Tibial artery (tissue), 4 donors: ENCODE measurements at regions of chr17 and their contacts with region 1.

Region 1: GRCh38 chr17:41548844-41549595 is 20.9 kb upstream of the KRT19 start:
- DNase-seq: peak; percentile 84 to 87
- H3K4me3 ChIP-seq: peak overlapping the region; percentile 4 to 23
- H3K27ac ChIP-seq: peak overlapping the region; percentile 61 to 62
- H3K4me1 ChIP-seq: peaks cover 0 to 28% (median 25%) of the 10 kb centered on the region in 4 donors
- H3K27me3 ChIP-seq: no peaks in the 10 kb centered on the region
- CTCF ChIP-seq: peak; percentile 84 to 90

Region 2: DNA sequence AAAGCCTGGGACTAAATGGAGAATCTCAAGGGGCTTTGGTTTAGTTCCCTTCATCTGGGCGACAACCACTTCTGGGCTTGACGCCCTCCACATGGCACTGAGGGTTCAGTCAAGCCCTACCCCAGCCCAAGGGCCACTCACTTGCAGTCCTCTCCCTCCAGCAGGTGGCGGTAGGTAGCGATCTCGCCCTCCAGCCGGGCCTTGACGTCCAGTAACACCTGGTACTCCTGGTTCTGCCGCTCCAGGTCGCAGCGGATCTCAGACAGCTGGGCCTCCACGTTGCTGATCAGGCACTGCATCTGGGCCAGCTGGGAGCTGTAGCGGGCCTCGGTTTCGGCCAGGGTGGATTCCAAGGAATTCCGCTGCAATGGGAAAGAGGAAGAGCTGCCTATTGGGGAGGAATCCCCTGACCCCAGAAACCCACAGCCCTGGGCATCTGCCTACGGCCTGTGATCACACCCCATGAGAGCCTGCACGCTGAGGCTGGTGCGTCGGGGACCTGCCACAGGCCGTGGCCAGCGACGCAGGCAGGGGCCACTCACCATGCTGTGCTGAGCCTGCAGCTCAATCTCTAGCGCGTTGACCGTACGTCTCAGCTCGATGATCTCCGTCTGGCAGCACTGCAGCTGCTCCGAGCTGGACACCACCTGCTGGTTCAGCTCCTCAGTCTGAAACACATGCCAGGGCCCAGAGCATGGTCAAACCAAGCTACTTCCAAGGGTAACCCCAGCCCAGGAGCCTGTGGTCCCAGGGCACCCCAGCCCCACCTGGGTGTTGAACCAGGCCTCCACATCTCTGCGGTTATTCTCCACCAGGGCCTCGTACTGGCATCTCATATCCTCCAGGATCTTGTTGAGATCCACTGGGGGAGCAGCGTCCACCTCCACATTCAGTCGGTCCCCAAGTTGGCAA is 62.0 kb before region 1 on chr17:
- intact Hi-C with region 1: no loop called
- DNase-seq: no peak
- H3K4me3 ChIP-seq: no peak overlapping the region
- H3K27ac ChIP-seq: no peak overlapping the region
- H3K4me1 ChIP-seq: no peaks in the 10 kb centered on the region
- H3K27me3 ChIP-seq: peaks cover 0 to 23% of the 10 kb centered on the region in 2 donors
- CTCF ChIP-seq: no peak

Region 3: GRCh38 chr17:41588126-41588810 is 39.2 kb after region 1 on chr17:
- intact Hi-C with region 1: no loop called
- DNase-seq: peak in 1 of 2 donors; percentile 73
- H3K4me3 ChIP-seq: no peak overlapping the region
- H3K27ac ChIP-seq: no peak overlapping the region
- H3K4me1 ChIP-seq: peaks cover 0 to 14% (median 4%) of the 10 kb centered on the region in 4 donors
- H3K27me3 ChIP-seq: peaks cover 0 to 6% of the 10 kb centered on the region in 2 donors
- CTCF ChIP-seq: no peak

Region 4: DNA sequence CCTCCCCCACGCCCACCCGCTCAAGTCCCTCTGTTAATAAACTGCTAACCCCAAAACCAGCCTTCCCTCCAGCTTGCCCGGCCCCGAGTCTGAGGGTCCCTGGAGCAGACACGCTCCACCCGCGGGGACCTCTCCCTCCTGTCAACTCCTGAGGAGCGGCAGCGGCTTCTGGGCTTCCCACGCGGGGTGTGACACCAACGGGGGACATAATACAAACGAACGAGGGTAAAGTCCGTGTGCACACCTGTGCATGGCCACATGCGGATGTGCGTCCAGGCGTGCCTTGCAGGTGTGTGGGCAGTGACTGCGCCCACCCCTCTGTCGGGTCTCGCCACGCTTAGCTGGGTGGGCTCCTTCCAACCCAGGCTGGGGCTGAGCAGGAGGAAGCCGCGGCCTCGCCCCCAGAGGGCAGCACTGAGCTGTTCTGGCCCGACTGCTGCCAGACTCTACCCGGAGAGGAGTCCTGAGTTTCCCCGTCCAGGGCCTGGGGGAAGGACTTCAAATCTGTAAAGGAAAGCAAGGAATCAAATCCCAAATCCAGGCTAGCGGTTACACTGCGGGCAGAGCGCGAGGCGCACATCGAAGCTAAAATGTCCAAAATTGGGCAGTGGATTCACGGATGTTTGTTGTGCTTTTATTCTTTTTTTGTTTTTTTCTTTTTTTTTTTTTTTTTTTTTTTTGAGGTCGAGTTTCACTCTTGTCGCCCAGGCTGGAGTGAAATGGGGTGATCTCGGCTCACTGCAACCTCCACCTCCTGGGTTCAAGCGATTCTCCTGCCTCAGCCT is 99.6 kb after region 1 on chr17:
- intact Hi-C with region 1: loop called (anchors 5 kb)
- DNase-seq: peak; percentile 79 to 91
- H3K4me3 ChIP-seq: peak overlapping the region; percentile 30 to 47
- H3K27ac ChIP-seq: peak overlapping the region; percentile 50 to 68
- H3K4me1 ChIP-seq: peaks cover 3 to 46% (median 26%) of the 10 kb centered on the region in 4 donors
- H3K27me3 ChIP-seq: no peaks in the 10 kb centered on the region
- CTCF ChIP-seq: peak; percentile 94